ENCODE measurements at regions of chr7 and their contacts with region 1.

Region 1: DNA sequence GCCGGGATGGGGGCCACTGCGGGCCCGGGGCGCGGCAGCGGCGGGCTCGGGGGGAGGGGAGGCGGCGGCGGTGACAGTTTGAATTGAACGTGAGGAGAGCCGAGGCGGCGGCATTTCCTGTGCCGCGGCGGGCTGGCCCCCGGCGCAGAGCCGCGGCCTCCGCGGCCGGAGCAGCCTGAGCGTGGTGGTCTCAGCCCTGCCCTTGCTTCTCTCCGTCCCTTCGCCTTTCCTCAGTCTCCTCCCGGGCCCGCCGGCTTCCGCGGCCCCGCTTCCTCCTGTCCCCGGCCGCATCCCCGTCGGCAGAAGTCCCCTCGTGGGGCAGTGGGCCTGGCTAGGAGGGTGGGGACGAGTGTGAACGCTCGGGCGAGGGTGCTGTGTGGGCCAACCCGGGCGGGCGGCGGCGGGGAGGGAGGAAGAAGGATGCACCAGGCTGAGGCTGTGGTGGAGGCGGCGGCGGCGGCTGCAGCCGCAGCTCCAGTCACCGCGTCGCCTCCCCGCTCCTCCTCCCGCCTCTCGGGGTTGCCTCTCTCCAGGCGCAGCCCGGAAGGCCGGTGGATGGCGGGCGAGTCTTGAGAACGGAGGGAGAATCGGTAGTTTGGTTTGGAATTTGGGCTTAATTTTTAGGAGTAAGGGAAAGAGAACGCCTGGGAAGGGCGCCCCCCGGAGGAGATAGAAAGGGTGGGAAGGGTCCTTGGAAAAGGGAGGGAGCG is 690 bp downstream of the SEPTIN7 start:
- DNase-seq: peak; percentile 87
- H3K4me3 ChIP-seq: peak overlapping the region; percentile 95
- H3K27ac ChIP-seq: peak overlapping the region; percentile 97
- H3K4me1 ChIP-seq: peaks cover 33% of the 10 kb centered on the region
- H3K27me3 ChIP-seq: no peaks in the 10 kb centered on the region
- CTCF ChIP-seq: peak; percentile 88

Region 2: GRCh38 chr7:35647171-35647574 is 154.4 kb before region 1 on chr7:
- CTCF ChIA-PET with region 1: no interaction called
- POLR2A ChIA-PET with region 1: no interaction called
- intact Hi-C with region 1: loop called (anchors 10 kb)
- DNase-seq: peak; percentile 93
- H3K4me3 ChIP-seq: peak overlapping the region; percentile 27
- H3K27ac ChIP-seq: peak overlapping the region; percentile 75
- H3K4me1 ChIP-seq: peaks cover 37% of the 10 kb centered on the region
- H3K27me3 ChIP-seq: no peaks in the 10 kb centered on the region
- CTCF ChIP-seq: no peak

Region 3: GRCh38 chr7:35707422-35707821 is 94.1 kb before region 1 on chr7:
- CTCF ChIA-PET with region 1: interaction called, 9 read pairs
- POLR2A ChIA-PET with region 1: no interaction called
- intact Hi-C with region 1: loop called (anchors 2 kb)
- DNase-seq: no peak
- H3K4me3 ChIP-seq: no peak overlapping the region
- H3K27ac ChIP-seq: no peak overlapping the region
- H3K4me1 ChIP-seq: peaks cover 28% of the 10 kb centered on the region
- H3K27me3 ChIP-seq: no peaks in the 10 kb centered on the region
- CTCF ChIP-seq: no peak

Region 4: GRCh38 chr7:35768346-35768745 is 33.2 kb before region 1 on chr7:
- CTCF ChIA-PET with region 1: no interaction called
- POLR2A ChIA-PET with region 1: no interaction called
- intact Hi-C with region 1: no loop called
- DNase-seq: no peak
- H3K4me3 ChIP-seq: no peak overlapping the region
- H3K27ac ChIP-seq: no peak overlapping the region
- H3K4me1 ChIP-seq: peaks cover 7% of the 10 kb centered on the region
- H3K27me3 ChIP-seq: no peaks in the 10 kb centered on the region
- CTCF ChIP-seq: no peak

Region 5: GRCh38 chr7:35828817-35829216 is 27.3 kb after region 1 on chr7:
- CTCF ChIA-PET with region 1: no interaction called
- POLR2A ChIA-PET with region 1: no interaction called
- intact Hi-C with region 1: no loop called
- DNase-seq: no peak
- H3K4me3 ChIP-seq: no peak overlapping the region
- H3K27ac ChIP-seq: peak overlapping the region; percentile 13
- H3K4me1 ChIP-seq: peaks cover 78% of the 10 kb centered on the region
- H3K27me3 ChIP-seq: no peaks in the 10 kb centered on the region
- CTCF ChIP-seq: no peak

Region 6: GRCh38 chr7:35869810-35870209 is 68.3 kb after region 1 on chr7:
- CTCF ChIA-PET with region 1: no interaction called
- POLR2A ChIA-PET with region 1: no interaction called
- intact Hi-C with region 1: loop called (anchors 10 kb)
- DNase-seq: no peak
- H3K4me3 ChIP-seq: no peak overlapping the region
- H3K27ac ChIP-seq: no peak overlapping the region
- H3K4me1 ChIP-seq: peaks cover 12% of the 10 kb centered on the region
- H3K27me3 ChIP-seq: no peaks in the 10 kb centered on the region
- CTCF ChIP-seq: no peak

Region 7: DNA sequence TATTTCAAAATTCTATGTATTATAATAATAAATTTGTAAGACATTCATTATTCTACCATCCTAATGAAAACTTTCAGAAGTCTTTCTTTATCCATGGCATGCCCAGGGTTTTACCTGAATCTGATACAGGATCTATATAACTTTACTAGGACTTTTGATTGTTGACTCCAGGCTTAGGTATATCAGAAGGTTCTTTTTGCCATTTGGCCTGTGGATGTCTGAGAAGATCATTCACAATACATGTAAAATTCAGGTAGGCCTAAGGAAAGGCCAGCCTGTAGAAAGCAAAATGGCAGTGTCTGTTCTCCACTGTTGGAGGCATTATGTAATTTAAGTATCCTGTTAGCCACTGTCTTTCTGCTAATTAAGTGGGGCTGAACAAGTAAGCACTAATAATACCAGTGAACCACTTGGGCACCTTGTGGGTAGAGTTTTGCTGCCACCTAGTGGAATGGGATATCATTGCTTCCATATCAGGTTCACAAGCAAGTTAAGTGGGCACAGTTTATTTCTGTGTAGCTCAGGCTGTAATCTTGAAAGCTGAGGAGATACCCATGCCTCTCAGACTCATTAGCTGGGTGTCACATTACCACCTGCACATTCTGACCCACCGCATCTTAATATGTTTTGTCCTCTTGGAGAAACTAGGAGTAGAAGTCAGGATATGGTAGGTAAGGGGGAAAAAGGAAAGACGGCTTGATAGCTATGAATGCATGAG is 104.8 kb after region 1 on chr7:
- CTCF ChIA-PET with region 1: no interaction called
- POLR2A ChIA-PET with region 1: no interaction called
- intact Hi-C with region 1: loop called (anchors 10 kb)
- DNase-seq: peak; percentile 87
- H3K4me3 ChIP-seq: no peak overlapping the region
- H3K27ac ChIP-seq: no peak overlapping the region
- H3K4me1 ChIP-seq: peaks cover 32% of the 10 kb centered on the region
- H3K27me3 ChIP-seq: no peaks in the 10 kb centered on the region
- CTCF ChIP-seq: peak; percentile 85

Measured in A673 (cell line).